Activated CD8-positive, alpha-beta T cell treated with anti-CD3 and anti-CD28 coated beads, Interleukin-2, amount 10 ng/mL, durations not matched to agents 7 days and 5 days (primary cell): ENCODE measurements at regions of chr10 and their contacts with region 1.

Region 1: GRCh38 chr10:74176380-74177139 is 25.5 kb downstream of the ADK start:
- DNase-seq: peak; percentile 98
- ATAC-seq: peak; percentile 96
- H3K4me3 Mint-ChIP-seq: peak overlapping the region; percentile 91
- H3K27ac Mint-ChIP-seq: peak overlapping the region; percentile 97
- H3K4me1 Mint-ChIP-seq: peaks cover 33% of the 10 kb centered on the region
- H3K27me3 Mint-ChIP-seq: no peaks in the 10 kb centered on the region

Region 2: GRCh38 chr10:74189999-74190421 is 13.4 kb after region 1 on chr10:
- CTCF ChIA-PET with region 1: interaction called, 11 read pairs
- POLR2A ChIA-PET with region 1: interaction called, 16 read pairs
- DNase-seq: peak; percentile 51
- ATAC-seq: peak; percentile 87
- H3K4me3 Mint-ChIP-seq: peak overlapping the region; percentile 61
- H3K27ac Mint-ChIP-seq: peak overlapping the region; percentile 89
- H3K4me1 Mint-ChIP-seq: peaks cover 45% of the 10 kb centered on the region
- H3K27me3 Mint-ChIP-seq: no peaks in the 10 kb centered on the region